IMR-90 (cell line): ENCODE measurements at regions of chr5 and their contacts with region 1.

Region 1: GRCh38 chr5:32151198-32151597 is 22.9 kb downstream of the GOLPH3 start:
- DNase-seq: no peak
- ATAC-seq: no peak
- H3K4me3 ChIP-seq: no peak overlapping the region
- H3K27ac ChIP-seq: peak overlapping the region; percentile 42
- H3K4me1 ChIP-seq: peaks cover 11% of the 10 kb centered on the region
- H3K27me3 ChIP-seq: no peaks in the 10 kb centered on the region
- CTCF ChIP-seq: no peak
- POLR2A ChIP-seq: no peak
- RAD21 ChIP-seq: no peak

Region 2: GRCh38 chr5:32339198-32339597 is 188.0 kb after region 1 on chr5:
- CTCF ChIA-PET with region 1: no interaction called
- POLR2A ChIA-PET with region 1: interaction called, 11 read pairs
- dilution Hi-C with region 1: no loop called
- in situ Hi-C with region 1: no loop called
- intact Hi-C with region 1: no loop called
- DNase-seq: peak; percentile 16
- ATAC-seq: no peak
- H3K4me3 ChIP-seq: no peak overlapping the region
- H3K27ac ChIP-seq: no peak overlapping the region
- H3K4me1 ChIP-seq: no peaks in the 10 kb centered on the region
- H3K27me3 ChIP-seq: no peaks in the 10 kb centered on the region
- CTCF ChIP-seq: no peak
- POLR2A ChIP-seq: no peak
- RAD21 ChIP-seq: no peak

Region 3: DNA sequence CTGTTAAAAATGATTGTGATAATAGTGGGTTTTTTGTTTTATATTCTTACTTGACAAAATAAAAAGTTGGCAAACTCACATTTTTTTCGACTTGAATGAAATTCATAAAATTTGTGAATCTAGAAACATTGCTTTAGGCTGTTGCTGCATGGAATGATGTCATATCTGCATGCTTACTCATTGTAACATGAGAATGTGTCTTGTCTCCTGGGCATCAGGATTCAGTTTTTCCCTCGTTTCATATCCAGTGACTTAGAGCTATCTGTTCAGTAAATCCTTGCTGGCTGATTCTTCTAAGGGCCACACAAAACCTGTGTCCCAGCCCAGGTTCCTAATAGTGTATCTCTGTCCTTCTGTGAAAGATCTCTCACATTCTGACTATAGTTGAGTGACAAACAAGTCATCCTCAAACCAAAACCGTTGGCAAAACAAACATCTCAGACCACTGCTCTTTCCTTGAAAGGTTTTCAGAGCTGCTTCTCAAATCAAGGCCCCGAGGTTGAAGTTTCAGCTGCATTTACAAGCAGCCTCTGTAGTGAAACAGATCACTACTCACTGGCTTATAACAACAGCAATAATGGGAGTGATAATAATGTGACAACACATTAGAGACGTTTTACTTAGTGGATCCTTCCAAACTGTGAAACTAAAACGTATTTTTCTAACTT is 654.9 kb after region 1 on chr5:
- CTCF ChIA-PET with region 1: no interaction called
- POLR2A ChIA-PET with region 1: no interaction called
- dilution Hi-C with region 1: no loop called
- in situ Hi-C with region 1: no loop called
- intact Hi-C with region 1: no loop called
- DNase-seq: peak; percentile 94
- ATAC-seq: peak; percentile 83
- H3K4me3 ChIP-seq: peak overlapping the region; percentile 28; the same call in 1 of the 2 replicates
- H3K27ac ChIP-seq: peak overlapping the region; percentile 82
- H3K4me1 ChIP-seq: peaks cover 10% of the 10 kb centered on the region
- H3K27me3 ChIP-seq: no peaks in the 10 kb centered on the region
- CTCF ChIP-seq: no peak
- POLR2A ChIP-seq: peak; percentile 32; the same call in 1 of the 2 replicates
- RAD21 ChIP-seq: no peak